Heart right ventricle (tissue), 16 donors: ENCODE measurements at regions of chr12 and their contacts with region 1.

Region 1: GRCh38 chr12:67355578-67356379 is 86.6 kb downstream of the CAND1 start:
- DNase-seq: no peak
- ATAC-seq: peak; percentile 54 to 72 (median 66)
- H3K4me3 ChIP-seq: no peak overlapping the region
- H3K27ac ChIP-seq: peak overlapping the region in 5 of 10 donors; percentile 8 to 57 (median 31)
- H3K4me1 ChIP-seq: peaks cover 4 to 52% (median 37%) of the 10 kb centered on the region in 9 donors
- H3K27me3 ChIP-seq: no peaks in the 10 kb centered on the region
- CTCF ChIP-seq: peak; percentile 26 to 74 (median 65)

Region 2: GRCh38 chr12:67034492-67034891 is 321.3 kb before region 1 on chr12:
- intact Hi-C with region 1: no loop called
- DNase-seq: no peak
- ATAC-seq: no peak
- H3K4me3 ChIP-seq: no peak overlapping the region
- H3K27ac ChIP-seq: no peak overlapping the region
- H3K4me1 ChIP-seq: no peaks in the 10 kb centered on the region
- H3K27me3 ChIP-seq: peaks cover 0 to 3% (median 0%) of the 10 kb centered on the region in 7 donors
- CTCF ChIP-seq: no peak

Region 3: GRCh38 chr12:67061860-67062592 is 293.8 kb before region 1 on chr12:
- intact Hi-C with region 1: no loop called
- DNase-seq: no peak
- ATAC-seq: no peak
- H3K4me3 ChIP-seq: no peak overlapping the region
- H3K27ac ChIP-seq: no peak overlapping the region
- H3K4me1 ChIP-seq: no peaks in the 10 kb centered on the region
- H3K27me3 ChIP-seq: peaks cover 0 to 60% (median 30%) of the 10 kb centered on the region in 7 donors
- CTCF ChIP-seq: no peak

Region 4: DNA sequence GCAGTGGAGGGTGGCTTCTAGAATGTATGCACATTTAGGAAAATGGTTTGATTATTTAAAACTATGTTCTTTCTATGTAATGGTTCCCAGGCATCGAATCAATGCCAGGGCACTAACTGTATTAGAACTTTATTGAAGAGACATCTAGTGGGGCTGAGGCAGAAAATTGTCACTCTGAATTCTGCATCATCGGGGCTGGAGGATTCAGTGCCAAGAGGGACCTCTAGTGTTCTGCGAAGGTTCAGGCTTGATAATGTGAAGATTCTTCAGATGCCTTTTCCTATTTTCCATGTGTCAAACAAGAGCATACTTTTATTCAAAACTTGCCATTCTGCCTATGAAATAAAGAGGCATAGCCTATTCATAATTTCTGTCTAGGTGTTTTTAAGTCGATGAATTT is 59.7 kb after region 1 on chr12:
- intact Hi-C with region 1: loop called in 8 of 10 experiments (anchors 2 to 10 kb)
- DNase-seq: peak in 1 of 2 donors; percentile 33
- ATAC-seq: peak in 7 of 8 donors; percentile 58 to 77 (median 71)
- H3K4me3 ChIP-seq: no peak overlapping the region
- H3K27ac ChIP-seq: no peak overlapping the region
- H3K4me1 ChIP-seq: peaks cover 0 to 26% (median 10%) of the 10 kb centered on the region in 9 donors
- H3K27me3 ChIP-seq: no peaks in the 10 kb centered on the region
- CTCF ChIP-seq: peak in 8 of 9 donors; percentile 28 to 63 (median 50)

Region 5: DNA sequence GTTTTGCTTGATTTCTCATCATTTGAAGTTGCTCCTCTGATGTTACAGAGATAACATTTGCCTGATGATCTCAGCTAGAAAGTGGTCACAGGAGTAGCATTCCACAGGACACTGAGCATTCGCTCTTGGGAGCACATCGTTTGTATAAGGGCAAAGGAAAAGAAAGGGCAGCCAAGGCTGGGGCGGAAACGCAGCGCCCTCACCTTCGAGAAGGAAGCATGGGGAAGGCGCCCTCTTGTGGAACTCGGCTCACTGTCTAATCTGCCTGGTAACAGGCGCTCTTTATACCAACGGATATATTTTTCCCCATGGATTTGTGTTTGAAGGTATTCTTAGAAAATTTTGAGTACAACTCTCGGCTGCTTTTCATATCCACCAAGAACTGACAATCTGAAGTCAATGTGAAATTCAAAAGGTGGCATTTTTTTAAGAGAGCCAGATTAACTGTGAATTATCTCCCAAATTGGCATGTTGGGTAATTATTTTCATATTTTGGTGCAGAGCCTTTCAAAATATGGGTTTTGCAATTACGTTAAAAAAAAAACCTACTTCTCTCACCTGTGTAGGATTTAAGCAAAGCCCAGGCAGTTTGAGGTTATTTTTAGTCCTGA is 86.1 kb after region 1 on chr12:
- intact Hi-C with region 1: loop called in 1 of 10 experiments (anchors 5 kb)
- DNase-seq: peak; percentile 86 to 90
- ATAC-seq: peak; percentile 96 to 98 (median 97)
- H3K4me3 ChIP-seq: peak overlapping the region in 6 of 10 donors; percentile 6 to 25 (median 22)
- H3K27ac ChIP-seq: peak overlapping the region in 8 of 10 donors; percentile 6 to 66 (median 40)
- H3K4me1 ChIP-seq: peaks cover 5 to 19% (median 17%) of the 10 kb centered on the region in 9 donors
- H3K27me3 ChIP-seq: no peaks in the 10 kb centered on the region
- CTCF ChIP-seq: peak; percentile 51 to 96 (median 84)

Region 6: DNA sequence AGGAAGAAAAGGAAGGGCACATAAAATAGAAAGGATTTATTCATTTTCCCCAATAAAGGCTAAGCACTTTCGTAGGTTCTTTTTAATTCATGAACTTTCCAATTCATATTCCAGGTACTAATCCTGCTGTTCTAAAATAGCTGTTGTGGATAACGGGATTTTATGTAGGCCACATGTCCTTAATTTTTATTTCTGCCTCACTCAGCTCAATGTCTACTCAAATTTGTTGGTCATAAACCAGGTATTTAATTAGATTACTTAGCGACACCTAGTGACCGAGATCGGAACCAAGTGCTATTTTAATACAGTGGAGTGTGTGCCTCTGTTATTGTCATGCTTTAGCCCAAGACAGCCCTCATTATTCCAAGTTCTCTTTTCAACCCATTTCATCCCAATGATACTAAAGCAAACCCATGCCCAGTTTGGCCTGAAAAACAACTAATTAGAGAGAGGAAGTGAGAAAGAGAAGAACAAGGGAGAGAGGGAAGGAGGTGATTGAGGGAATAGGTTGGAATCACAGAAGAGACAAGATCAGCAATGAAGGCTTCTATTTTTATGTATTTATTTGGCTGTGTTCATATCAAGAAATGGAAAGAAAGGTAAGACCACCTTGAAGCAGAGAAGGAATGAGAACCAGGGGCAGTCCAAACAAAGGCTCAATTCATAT is 587.6 kb after region 1 on chr12:
- intact Hi-C with region 1: loop called (anchors 1 to 10 kb)
- DNase-seq: peak in 1 of 2 donors; percentile 79
- ATAC-seq: peak; percentile 79 to 92 (median 88)
- H3K4me3 ChIP-seq: no peak overlapping the region
- H3K27ac ChIP-seq: peak overlapping the region in 6 of 10 donors; percentile 15 to 53 (median 45)
- H3K4me1 ChIP-seq: peaks cover 0 to 26% (median 8%) of the 10 kb centered on the region in 9 donors
- H3K27me3 ChIP-seq: no peaks in the 10 kb centered on the region
- CTCF ChIP-seq: peak; percentile 45 to 83 (median 76)

Region 7: DNA sequence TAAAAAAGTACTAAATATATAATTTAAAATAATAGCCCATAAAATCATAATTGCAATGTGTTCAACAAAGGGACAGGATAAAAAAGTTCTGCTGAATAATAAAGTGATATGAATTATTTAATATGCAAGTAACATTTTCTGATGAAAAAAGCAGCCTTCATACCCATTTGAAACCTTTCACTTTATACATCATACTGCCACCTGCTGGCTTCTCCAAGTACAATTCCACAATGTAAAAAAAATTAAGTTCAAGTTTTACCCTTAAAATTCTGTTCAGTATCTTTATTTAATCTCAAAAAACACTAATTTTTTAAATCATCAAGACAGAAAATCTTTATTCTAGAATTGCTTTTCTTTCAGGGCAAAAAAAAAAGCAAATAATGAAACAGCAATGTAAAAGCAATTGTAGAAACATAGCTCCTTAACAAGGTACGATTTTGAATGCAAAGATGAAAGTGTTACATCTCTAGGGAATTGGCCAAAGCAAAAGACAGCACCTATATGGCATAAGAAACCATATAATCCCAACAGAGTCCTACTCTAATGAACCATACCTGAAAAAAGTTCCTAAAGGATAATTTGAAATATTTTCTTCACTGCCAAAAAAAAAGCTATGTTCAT is 961.4 kb after region 1 on chr12:
- intact Hi-C with region 1: loop called in 3 of 10 experiments (anchors 10 kb)
- DNase-seq: peak in 1 of 2 donors; percentile 42
- ATAC-seq: no peak
- H3K4me3 ChIP-seq: no peak overlapping the region
- H3K27ac ChIP-seq: no peak overlapping the region
- H3K4me1 ChIP-seq: peaks cover 0 to 16% (median 0%) of the 10 kb centered on the region in 9 donors
- H3K27me3 ChIP-seq: no peaks in the 10 kb centered on the region
- CTCF ChIP-seq: peak; percentile 42 to 85 (median 76)